ENCODE measurements at regions of chr2 and their contacts with region 1.

Region 1: GRCh38 chr2:52465267-52465666 is 1302.3 kb upstream of the CHAC2 start:
- DNase-seq: no peak
- H3K4me3 ChIP-seq: no peak overlapping the region
- CTCF ChIP-seq: no peak
- POLR2A ChIP-seq: no peak

Region 2: DNA sequence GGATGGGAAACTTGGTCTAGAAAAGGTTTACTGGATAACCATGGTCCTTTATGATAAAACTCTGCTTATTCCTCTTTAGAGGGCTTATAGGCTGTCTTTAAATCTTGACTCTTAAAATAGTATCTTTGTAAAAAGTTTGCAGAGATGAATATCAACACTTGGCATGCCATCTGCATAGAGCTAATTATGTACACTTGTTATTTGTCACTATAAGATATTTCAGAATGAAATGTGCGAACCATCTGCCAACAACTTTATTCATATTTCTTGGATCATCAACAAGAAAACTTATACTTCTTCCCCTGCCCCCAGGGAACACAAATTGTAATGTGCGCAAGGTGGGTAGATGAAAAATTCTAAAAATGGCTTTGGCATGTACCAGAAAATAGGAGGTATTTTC is 649.3 kb after region 1 on chr2:
- intact Hi-C with region 1: loop called (anchors 10 kb)
- DNase-seq: no peak
- H3K4me3 ChIP-seq: no peak overlapping the region
- CTCF ChIP-seq: no peak
- POLR2A ChIP-seq: no peak

Measured in lower leg skin (tissue), 4 donors.